ENCODE measurements at regions of chr9 and their contacts with region 1.

Region 1: DNA sequence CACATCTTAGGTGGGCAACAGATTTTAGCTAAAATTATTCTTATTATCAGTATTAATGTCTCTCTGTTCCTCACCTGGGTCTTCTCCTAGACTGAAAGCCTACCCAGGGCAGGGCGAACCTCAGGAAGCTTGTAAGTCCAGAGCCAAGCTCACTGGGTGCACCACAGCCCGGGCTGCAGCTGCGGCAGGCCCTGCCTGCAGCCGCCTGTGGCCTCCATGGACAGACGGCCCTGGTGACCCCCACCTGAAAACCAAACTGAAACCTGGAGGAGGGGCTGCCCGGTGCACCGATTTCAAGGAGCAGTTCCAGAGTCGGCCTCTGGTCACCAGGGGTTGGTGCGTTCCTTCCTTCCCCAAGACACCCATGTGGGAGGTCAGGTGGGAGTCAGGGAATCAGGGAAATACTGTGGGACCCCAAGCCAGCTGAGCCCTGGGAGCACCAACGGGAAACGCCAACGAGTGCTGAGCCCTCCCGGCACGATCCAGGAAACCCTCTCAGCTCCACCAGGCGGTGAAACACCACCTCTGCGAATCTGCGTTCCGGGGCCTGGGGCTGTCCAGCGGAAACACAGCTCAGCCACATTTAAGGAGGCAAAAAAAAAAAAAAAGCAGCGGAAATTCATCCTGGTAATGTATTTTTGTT is 68.6 kb upstream of the PPP1R26 start:
- DNase-seq: peak; percentile 26
- H3K4me3 ChIP-seq: no peak overlapping the region
- H3K27ac ChIP-seq: no peak overlapping the region
- H3K4me1 ChIP-seq: no peaks in the 10 kb centered on the region; a peak in 1 of 4 replicates
- H3K27me3 ChIP-seq: no peaks in the 10 kb centered on the region
- CTCF ChIP-seq: no peak
- EP300 ChIP-seq: no peak
- RAD21 ChIP-seq: no peak

Region 2: DNA sequence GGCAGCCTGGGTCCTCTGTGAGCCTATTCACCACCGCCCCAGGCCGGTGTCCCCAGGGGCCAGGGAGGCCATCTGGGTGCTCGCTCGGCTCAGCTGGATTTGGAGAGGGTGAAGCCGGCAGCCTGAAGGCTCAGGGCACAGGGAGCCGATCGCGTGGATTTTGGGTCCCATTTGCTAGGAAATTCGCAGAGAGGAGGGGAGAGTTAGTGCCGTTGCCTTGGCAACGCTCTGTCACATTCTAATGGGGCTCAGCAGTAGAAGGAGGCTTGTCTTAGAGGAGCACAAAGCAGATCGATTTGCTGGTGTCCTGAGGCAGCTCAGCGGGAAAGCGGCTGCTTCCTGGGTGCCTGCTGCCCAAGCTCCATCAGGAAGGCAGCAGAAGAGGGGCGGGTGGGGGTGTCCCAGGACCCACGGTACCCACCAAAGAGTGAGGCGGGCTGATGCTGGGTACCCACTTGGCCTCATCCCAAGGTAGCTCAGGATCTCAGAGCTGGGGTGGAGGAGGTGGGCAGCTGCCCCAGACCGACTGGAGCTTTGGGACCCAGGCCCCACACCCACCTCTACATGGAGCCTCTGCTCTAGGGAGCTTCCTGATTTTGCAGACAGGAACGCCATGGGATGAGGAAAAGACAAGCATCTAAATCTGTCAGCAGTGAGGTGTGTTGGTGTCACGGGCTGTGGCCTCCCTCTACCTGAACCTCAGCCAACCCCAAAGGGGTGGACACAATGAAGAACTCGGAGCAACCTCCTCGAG is 340.6 kb before region 1 on chr9:
- CTCF ChIA-PET with region 1: interaction called, 14 read pairs
- POLR2A ChIA-PET with region 1: no interaction called
- DNase-seq: peak; percentile 66
- H3K4me3 ChIP-seq: no peak overlapping the region
- H3K27ac ChIP-seq: no peak overlapping the region
- H3K4me1 ChIP-seq: no peaks in the 10 kb centered on the region; a peak in 1 of 4 replicates
- H3K27me3 ChIP-seq: no peaks in the 10 kb centered on the region
- CTCF ChIP-seq: no peak
- EP300 ChIP-seq: no peak
- RAD21 ChIP-seq: no peak

Region 3: GRCh38 chr9:135095470-135096407 is 315.2 kb before region 1 on chr9:
- CTCF ChIA-PET with region 1: interaction called, 290 read pairs
- POLR2A ChIA-PET with region 1: no interaction called
- DNase-seq: peak; percentile 54
- H3K4me3 ChIP-seq: no peak overlapping the region
- H3K27ac ChIP-seq: 0 out of 4 replicates have a peak overlapping the region, but pooled peaks of 1 of the 2 experiments have one; percentile 1
- H3K4me1 ChIP-seq: peaks cover 0 to 16% of the 10 kb centered on the region in 2 experiments; a peak in 2 of 4 replicates
- H3K27me3 ChIP-seq: no peaks in the 10 kb centered on the region
- CTCF ChIP-seq: no peak
- EP300 ChIP-seq: no peak
- RAD21 ChIP-seq: no peak

Region 4: GRCh38 chr9:135221951-135222631 is 188.9 kb before region 1 on chr9:
- CTCF ChIA-PET with region 1: interaction called, 24 read pairs
- POLR2A ChIA-PET with region 1: no interaction called
- DNase-seq: peak; percentile 68
- H3K4me3 ChIP-seq: no peak overlapping the region
- H3K27ac ChIP-seq: no peak overlapping the region
- H3K4me1 ChIP-seq: peaks cover 0 to 46% of the 10 kb centered on the region in 2 experiments; a peak in 2 of 4 replicates
- H3K27me3 ChIP-seq: no peaks in the 10 kb centered on the region
- CTCF ChIP-seq: no peak
- EP300 ChIP-seq: no peak
- RAD21 ChIP-seq: no peak

Region 5: DNA sequence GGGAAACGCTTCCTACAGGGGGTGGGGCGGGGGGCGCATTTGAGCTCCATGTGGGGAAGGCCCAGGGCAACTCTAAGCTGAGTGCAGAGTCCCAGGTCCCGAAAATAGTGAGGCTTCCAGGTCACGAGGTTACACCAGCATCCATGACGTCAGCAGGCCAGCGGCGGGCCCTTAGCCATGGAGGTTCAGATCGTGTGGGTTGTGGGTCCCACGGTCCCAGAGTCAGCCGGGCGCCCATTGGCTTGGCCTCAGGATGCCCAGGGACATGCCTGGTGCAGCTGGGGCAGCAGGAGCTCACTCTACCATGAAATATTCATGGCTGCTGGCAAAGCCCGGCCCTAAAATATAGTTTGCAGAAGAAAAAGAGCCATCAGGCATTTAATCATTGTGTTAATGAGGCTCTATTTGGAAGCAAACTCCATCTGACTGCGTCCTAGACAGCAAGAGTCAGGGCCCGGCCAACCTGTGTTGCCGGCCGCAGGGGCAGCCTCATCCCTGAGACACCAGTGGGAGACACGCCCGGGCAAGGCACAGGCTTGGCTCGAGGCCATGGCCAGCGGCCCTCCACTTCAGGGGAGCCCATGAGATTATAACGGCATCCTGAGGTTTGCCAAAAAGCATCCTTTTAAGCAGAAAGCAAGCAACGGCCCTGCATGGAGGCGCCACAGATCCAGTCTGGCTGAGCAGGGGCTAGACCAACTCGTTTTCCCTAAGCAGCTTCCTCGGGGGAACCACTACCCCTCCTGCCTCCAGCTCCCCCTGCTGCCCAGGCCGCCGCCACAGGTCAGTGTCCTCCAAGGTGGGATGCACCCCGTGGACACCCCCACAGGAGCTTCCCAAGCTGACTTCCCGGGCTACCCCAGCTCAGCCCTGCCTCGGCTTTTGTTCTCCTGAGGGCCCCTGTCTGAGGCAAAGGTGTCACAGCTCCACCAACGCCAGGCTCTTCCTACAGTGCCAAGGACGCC is 40.3 kb before region 1 on chr9:
- CTCF ChIA-PET with region 1: interaction called, 16 read pairs
- POLR2A ChIA-PET with region 1: no interaction called
- DNase-seq: no peak
- H3K4me3 ChIP-seq: no peak overlapping the region
- H3K27ac ChIP-seq: no peak overlapping the region
- H3K4me1 ChIP-seq: peaks cover 0 to 2% of the 10 kb centered on the region in 2 experiments; a peak in 1 of 4 replicates
- H3K27me3 ChIP-seq: no peaks in the 10 kb centered on the region
- CTCF ChIP-seq: no peak
- EP300 ChIP-seq: no peak
- RAD21 ChIP-seq: no peak

Region 6: DNA sequence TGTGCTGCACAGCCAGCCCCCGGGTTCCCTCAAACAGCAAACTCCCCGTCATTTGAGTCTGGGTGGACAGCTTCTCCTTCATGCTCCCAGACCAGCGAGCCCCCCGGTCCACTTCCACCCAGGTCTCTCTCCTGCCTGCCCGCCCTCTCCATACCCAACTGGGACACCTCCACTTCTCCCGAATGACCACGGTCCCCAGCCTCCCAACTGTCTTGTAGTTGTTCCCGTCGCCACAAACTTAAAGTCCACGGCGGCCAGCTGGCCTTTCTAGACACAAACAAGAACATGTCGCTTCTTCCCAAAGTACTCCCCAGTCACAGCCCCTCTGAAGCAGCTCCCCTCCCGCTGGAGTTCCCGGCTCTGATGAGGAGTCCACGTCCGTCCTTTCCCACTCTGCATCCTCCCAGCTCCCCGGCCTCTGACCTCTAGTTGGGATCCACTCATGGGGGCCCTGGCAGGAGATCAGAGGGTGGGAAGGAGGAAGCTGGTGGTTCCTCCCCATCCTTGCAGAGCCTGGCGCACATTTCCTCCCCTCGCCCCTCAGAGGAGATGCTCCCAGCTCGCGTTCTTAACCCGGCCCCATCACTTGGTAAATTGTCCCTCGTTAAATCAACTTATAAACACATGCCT is 44.6 kb after region 1 on chr9:
- CTCF ChIA-PET with region 1: interaction called, 14 read pairs
- POLR2A ChIA-PET with region 1: no interaction called
- DNase-seq: no peak
- H3K4me3 ChIP-seq: no peak overlapping the region
- H3K27ac ChIP-seq: no peak overlapping the region
- H3K4me1 ChIP-seq: peaks cover 0 to 10% of the 10 kb centered on the region in 2 experiments; a peak in 1 of 4 replicates
- H3K27me3 ChIP-seq: no peaks in the 10 kb centered on the region
- CTCF ChIP-seq: no peak
- EP300 ChIP-seq: no peak
- RAD21 ChIP-seq: no peak